Breast epithelium (tissue), 4 donors: ENCODE measurements at regions of chrX and their contacts with region 1.

Region 1: DNA sequence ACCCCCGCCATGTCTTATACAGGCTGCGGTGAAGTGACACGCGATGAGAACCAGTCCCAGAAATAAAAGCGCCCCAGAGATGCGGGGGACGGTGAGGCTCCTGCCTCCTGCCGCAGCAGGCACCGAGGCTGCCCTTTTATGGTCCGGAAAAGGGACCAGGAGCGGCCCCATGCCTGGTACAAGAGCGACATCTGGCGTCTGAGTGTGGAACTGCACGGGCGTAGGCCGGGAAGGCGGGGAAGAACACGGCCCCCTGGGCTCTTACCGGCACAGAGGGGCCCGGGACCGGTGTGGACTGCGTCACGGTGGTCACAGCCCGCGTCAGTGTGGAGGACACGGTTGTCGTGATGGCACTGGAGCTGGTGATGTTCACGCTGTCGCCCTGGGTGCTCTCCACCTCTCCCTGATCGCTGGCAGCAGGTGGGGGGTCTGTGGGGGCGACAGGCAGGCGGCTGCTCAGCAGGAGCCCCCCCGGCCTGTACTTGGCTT is 8.9 kb upstream of the RENBP start:
- DNase-seq: peak; percentile 65 to 66
- H3K4me3 ChIP-seq: no peak overlapping the region
- H3K27ac ChIP-seq: peak overlapping the region; percentile 52 to 68
- H3K4me1 ChIP-seq: no peaks in the 10 kb centered on the region
- H3K27me3 ChIP-seq: peaks cover 0 to 8% of the 10 kb centered on the region in 2 donors
- CTCF ChIP-seq: peak; percentile 89 to 97 (median 96)
- POLR2A ChIP-seq: no peak

Region 2: DNA sequence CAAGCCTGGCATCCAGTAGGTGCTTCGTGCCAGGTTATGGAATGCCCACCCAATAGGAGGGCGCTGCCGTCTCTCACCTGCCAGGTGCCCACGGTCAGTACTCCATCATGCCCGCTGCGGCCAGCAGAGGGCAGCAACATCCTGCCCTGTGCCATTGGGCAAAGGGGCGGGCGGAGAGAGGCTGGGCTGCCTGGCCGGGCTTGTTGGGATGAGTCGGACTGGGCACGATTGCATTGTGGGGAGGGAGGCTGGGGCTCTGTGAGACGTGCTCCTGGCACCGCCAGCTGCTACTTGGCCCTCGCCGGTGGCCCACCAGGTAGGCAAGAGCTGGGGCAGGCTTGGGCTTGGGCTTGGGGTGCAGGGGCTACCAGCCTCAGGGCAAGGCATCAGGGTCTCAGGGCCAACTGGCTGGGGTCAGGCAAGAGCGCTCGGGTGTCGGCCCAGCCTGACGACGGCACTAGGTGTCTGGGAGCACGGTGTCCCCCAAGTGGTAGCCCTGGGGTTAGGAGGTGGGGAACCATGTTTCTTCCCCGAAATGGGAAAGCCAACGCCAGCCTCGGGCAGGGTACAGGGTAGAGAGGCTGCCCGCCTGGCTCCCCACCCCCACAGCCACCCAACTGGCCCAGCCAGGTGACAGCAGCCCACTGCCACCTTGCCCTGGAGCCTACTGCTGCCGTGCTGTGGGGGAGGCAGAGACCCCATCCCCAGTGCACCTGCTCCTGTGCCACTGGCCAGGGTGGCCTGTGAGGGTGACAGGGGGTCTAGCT is 189.2 kb before region 1 on chrX and contains the start of gene PLXNB3:
- intact Hi-C with region 1: loop called (anchors 5 kb)
- DNase-seq: peak; percentile 78 to 87
- H3K4me3 ChIP-seq: peak within 1 kb of the TSS in 2 of 3 donors; percentile 40 to 56
- H3K27ac ChIP-seq: peak within 1 kb of the TSS; percentile 66 to 83
- H3K4me1 ChIP-seq: no peaks in the 10 kb centered on the region
- H3K27me3 ChIP-seq: peaks cover 0 to 29% of the 10 kb centered on the region in 2 donors
- CTCF ChIP-seq: peak; percentile 64 to 87 (median 80)
- POLR2A ChIP-seq: no peak
- total RNA-seq, gene PLXNB3: 12.3 to 17.9 (median 13.4) TPM

Region 3: DNA sequence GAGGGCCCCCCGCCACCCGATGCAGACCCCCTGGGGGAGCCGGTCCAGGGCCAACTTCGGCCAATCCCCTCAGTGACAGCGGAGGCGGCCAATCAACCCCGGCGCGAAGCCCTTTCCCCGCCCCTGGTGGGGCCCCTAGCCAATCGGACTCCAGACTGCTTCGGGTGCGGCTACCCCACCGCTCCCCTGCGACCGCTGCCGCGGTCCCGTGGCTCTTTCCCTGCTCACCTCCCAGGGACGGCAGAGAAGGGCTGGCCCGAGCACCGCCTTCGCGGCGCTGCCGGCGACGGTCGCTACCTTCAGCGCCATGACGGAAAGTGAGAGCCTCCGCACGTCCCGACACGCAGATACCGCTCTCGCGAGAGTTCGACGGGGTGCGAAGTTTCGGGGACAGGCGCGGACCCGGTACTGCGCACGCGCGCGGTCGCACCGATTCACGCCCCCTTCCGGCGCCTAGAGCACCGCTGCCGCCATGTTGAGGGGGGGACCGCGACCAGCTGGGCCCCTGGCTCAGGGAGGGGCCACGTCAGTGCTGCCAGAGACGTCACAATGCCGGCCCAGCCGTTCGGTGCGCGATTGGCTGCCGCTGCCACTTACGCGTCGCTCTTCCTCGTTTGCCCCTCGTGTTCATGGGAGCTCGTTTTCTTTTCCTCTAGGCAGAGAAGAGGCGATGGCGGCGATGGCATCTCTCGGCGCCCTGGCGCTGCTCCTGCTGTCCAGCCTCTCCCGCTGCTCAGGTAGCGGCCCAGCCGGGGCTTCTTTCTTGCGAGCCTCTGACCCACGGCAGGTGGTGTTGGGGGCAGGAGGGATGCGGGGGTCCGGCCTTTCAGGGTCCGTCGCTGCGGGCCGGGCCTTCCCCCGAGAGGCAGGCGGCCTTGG is 159.1 kb before region 1 on chrX and contains the starts of genes IDH3G and SSR4:
- intact Hi-C with region 1: loop called (anchors 10 kb)
- DNase-seq: peak; percentile 89 to 90
- H3K4me3 ChIP-seq: peak within 1 kb of the TSS; percentile 56 to 83 (median 65)
- H3K27ac ChIP-seq: peak within 1 kb of the TSS; percentile 89 to 97
- H3K4me1 ChIP-seq: no peaks in the 10 kb centered on the region
- H3K27me3 ChIP-seq: peaks cover 0 to 37% of the 10 kb centered on the region in 2 donors
- CTCF ChIP-seq: no peak
- POLR2A ChIP-seq: no peak
- total RNA-seq, gene IDH3G: 75.4 to 91.5 (median 76.5) TPM
- total RNA-seq, gene SSR4: 112 to 252 (median 182) TPM